CD4-positive, alpha-beta T cell (primary cell): ENCODE measurements at regions of chr1 and their contacts with region 1.

Region 1: DNA sequence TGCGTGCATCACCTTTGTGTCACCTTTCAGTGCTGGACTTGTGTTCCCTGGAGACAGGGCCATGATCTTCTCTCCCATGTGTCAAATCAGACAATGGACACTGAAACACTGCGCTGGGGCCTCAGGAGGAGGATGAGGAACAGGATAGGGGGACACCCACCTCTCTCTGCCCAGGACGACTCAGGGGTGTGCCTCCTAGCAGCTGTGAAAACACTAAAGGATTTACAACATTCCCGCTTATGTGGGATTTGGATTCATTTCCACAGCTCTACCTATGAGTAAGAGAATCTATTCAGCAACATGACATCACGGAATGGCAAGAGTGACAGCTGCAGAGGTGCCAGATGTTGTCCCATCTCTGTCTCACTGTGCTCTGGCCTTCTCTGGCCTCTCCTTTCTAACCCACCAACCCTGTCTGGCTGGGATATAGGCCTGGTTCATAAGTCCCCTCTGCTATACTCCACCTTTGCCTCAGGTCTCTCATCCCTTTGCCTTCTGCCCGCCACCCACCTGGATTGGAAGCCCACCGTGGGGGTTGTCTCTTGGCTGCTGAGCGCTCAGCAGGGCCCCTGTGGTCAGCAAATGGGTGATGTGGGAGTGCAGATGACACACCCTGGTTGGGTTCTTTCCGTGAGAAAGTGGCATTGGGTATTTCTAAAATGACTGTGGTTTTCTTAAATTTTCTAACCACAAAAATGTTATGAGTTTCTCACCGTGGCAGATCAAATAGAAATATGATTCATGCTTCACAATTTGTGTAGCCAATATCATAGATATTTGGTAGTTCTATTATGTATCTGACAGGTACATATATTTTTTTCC is 47.1 kb upstream of the TLR5 start:
- DNase-seq: peak in 12 of 14 experiments; percentile 9 to 82 (median 38)
- ATAC-seq: peak; percentile 82
- H3K4me3 ChIP-seq: no peak overlapping the region
- H3K4me3 Mint-ChIP-seq: peak overlapping the region; percentile 47
- H3K27ac ChIP-seq: no peak overlapping the region
- H3K27ac Mint-ChIP-seq: peak overlapping the region; percentile 87
- H3K4me1 ChIP-seq: peaks cover 28% of the 10 kb centered on the region
- H3K4me1 Mint-ChIP-seq: peaks cover 49% of the 10 kb centered on the region
- H3K27me3 ChIP-seq: no peaks in the 10 kb centered on the region
- H3K27me3 Mint-ChIP-seq: no peaks in the 10 kb centered on the region
- CTCF ChIP-seq: no peak

Region 2: GRCh38 chr1:223207293-223208066 is 17.4 kb after region 1 on chr1:
- CTCF ChIA-PET with region 1: no interaction called
- POLR2A ChIA-PET with region 1: no interaction called
- intact Hi-C with region 1: no loop called
- DNase-seq: no peak
- ATAC-seq: no peak
- H3K4me3 ChIP-seq: no peak overlapping the region
- H3K4me3 Mint-ChIP-seq: no peak overlapping the region
- H3K27ac ChIP-seq: no peak overlapping the region
- H3K27ac Mint-ChIP-seq: no peak overlapping the region
- H3K4me1 ChIP-seq: no peaks in the 10 kb centered on the region
- H3K4me1 Mint-ChIP-seq: no peaks in the 10 kb centered on the region
- H3K27me3 ChIP-seq: no peaks in the 10 kb centered on the region
- H3K27me3 Mint-ChIP-seq: no peaks in the 10 kb centered on the region
- CTCF ChIP-seq: no peak

Region 3: GRCh38 chr1:223233410-223234169 is 43.5 kb after region 1 on chr1:
- CTCF ChIA-PET with region 1: no interaction called
- POLR2A ChIA-PET with region 1: interaction called, 8 read pairs
- intact Hi-C with region 1: loop called in 1 of 2 experiments (anchors 10 kb)
- DNase-seq: peak in 2 of 14 experiments; percentile 47 to 48
- ATAC-seq: peak; percentile 41
- H3K4me3 ChIP-seq: no peak overlapping the region
- H3K4me3 Mint-ChIP-seq: peak overlapping the region; percentile 1
- H3K27ac ChIP-seq: peak overlapping the region in 1 of 2 donors; percentile 86
- H3K27ac Mint-ChIP-seq: peak overlapping the region; percentile 95
- H3K4me1 ChIP-seq: peaks cover 62% of the 10 kb centered on the region
- H3K4me1 Mint-ChIP-seq: peaks cover 74% of the 10 kb centered on the region
- H3K27me3 ChIP-seq: no peaks in the 10 kb centered on the region
- H3K27me3 Mint-ChIP-seq: no peaks in the 10 kb centered on the region
- CTCF ChIP-seq: no peak

Region 4: GRCh38 chr1:223269006-223269405 is 78.9 kb after region 1 on chr1:
- CTCF ChIA-PET with region 1: no interaction called
- POLR2A ChIA-PET with region 1: no interaction called
- intact Hi-C with region 1: no loop called
- DNase-seq: no peak
- ATAC-seq: no peak
- H3K4me3 ChIP-seq: no peak overlapping the region
- H3K4me3 Mint-ChIP-seq: no peak overlapping the region
- H3K27ac ChIP-seq: no peak overlapping the region
- H3K27ac Mint-ChIP-seq: no peak overlapping the region
- H3K4me1 ChIP-seq: no peaks in the 10 kb centered on the region
- H3K4me1 Mint-ChIP-seq: peaks cover 13% of the 10 kb centered on the region
- H3K27me3 ChIP-seq: no peaks in the 10 kb centered on the region
- H3K27me3 Mint-ChIP-seq: no peaks in the 10 kb centered on the region
- CTCF ChIP-seq: no peak